HepG2 (cell line): ENCODE measurements at regions of chr2 and their contacts with region 1.

Region 1: DNA sequence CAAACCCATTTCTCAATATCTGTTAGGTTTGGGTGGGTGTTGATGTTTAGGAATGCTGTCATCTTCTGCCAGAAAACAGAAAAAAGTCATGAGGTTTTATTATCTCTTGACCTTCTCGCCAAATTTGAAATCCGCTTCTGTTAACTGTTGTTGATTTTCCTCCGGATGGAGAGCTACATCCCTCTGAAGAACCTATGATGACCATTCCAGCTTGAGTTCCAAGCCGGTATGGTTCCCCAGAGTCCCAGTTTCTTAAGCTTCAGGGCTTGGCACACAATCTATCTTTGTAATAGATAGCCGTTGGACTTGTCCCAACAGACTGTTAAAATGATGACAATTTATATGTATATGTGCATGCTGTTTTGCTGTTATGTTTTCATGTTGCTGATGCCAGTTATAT is 1201.0 kb downstream of the LRP1B start:
- DNase-seq: no peak
- ATAC-seq: no peak
- H3K4me3 ChIP-seq: no peak overlapping the region
- H3K27ac ChIP-seq: no peak overlapping the region
- H3K4me1 ChIP-seq: no peaks in the 10 kb centered on the region
- H3K27me3 ChIP-seq: no peaks in the 10 kb centered on the region
- CTCF ChIP-seq: no peak
- EP300 ChIP-seq: no peak
- POLR2A ChIP-seq: no peak
- RAD21 ChIP-seq: no peak

Region 2: DNA sequence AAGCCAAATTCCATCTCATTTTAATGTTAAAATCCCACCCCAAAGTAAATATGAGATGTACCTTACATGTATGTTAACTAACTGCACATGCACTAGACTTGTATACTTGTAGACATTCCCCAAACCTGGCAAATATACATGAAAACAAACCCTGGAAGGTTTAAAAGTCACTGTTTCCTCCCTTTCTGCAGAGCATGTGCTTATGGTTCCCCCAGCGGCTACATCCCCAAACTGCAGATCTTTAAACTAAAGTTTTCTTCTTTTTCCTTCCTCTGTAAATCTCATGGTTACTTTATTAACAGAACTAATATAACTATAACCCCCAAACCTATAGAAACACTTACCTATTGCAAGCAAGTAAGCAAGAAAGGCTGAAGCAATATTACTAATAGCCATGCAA is 469.4 kb after region 1 on chr2:
- CTCF ChIA-PET with region 1: no interaction called
- POLR2A ChIA-PET with region 1: no interaction called
- in situ Hi-C with region 1: no loop called
- intact Hi-C with region 1: loop called (anchors 10 kb)
- DNase-seq: peak; percentile 12
- ATAC-seq: peak; percentile 88
- H3K4me3 ChIP-seq: no peak overlapping the region
- H3K27ac ChIP-seq: no peak overlapping the region
- H3K4me1 ChIP-seq: no peaks in the 10 kb centered on the region
- H3K27me3 ChIP-seq: no peaks in the 10 kb centered on the region
- CTCF ChIP-seq: peak; percentile 42
- EP300 ChIP-seq: no peak
- POLR2A ChIP-seq: no peak
- RAD21 ChIP-seq: no peak